Activated B cell treated with CpG ODN at 0.5 μM for 24 hours (primary cell): ENCODE measurements at regions of chr2 and their contacts with region 1.

Region 1: GRCh38 chr2:24421668-24422067 is 61.3 kb upstream of the ITSN2 start:
- DNase-seq: peak; percentile 26
- ATAC-seq: peak; percentile 65
- H3K4me3 Mint-ChIP-seq: no peak overlapping the region
- H3K27ac Mint-ChIP-seq: no peak overlapping the region
- H3K4me1 Mint-ChIP-seq: no peaks in the 10 kb centered on the region
- H3K27me3 Mint-ChIP-seq: peaks cover 2% of the 10 kb centered on the region
- CTCF ChIP-seq: no peak

Region 2: DNA sequence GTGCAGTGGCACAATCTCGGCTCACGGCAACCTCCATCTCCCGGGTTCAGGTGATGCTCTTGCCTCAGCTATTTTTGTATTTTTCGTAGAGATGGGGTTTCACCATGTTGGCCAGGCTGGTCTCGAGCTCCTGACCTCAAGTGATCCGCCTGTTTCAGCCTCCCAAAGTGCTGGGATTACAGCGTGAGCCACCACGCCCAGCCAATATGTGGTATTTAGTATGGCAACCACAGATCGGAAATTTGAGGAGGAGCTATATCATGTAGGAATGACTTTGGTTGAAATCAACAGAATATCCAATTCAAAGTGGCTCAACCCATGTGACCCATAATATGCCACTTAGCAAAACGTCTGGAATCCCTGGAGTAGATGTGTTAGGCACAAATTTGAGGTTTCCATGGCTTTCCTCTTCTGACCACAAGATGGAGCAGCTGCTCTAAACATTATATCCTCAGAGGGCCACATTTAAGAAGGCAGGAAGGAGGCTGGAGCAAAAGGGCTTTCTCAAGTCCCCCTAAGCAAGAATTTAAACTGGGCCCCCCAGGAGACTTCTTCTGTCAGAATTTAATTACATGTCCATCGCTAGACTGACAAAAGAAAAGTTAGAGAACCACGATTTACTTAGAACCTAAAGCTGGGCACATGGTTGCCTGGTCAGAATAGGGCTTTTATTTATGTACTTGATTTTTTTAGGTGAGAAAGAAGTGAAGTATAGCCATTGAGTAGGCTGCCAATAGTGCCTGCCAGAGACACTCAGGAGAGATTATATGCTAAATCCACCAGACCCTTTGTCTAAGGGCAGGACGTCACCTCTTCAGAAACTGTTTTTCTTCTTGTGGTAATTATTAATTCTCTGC is 11.7 kb before region 1 on chr2:
- CTCF ChIA-PET with region 1: interaction called, 24 read pairs
- POLR2A ChIA-PET with region 1: no interaction called
- intact Hi-C with region 1: no loop called
- DNase-seq: no peak
- ATAC-seq: peak; percentile 79
- H3K4me3 Mint-ChIP-seq: no peak overlapping the region
- H3K27ac Mint-ChIP-seq: no peak overlapping the region
- H3K4me1 Mint-ChIP-seq: no peaks in the 10 kb centered on the region
- H3K27me3 Mint-ChIP-seq: peaks cover 11% of the 10 kb centered on the region
- CTCF ChIP-seq: peak; percentile 86

Region 3: GRCh38 chr2:24543252-24543651 is 121.6 kb after region 1 on chr2:
- CTCF ChIA-PET with region 1: no interaction called
- POLR2A ChIA-PET with region 1: no interaction called
- intact Hi-C with region 1: loop called (anchors 5 kb)
- DNase-seq: no peak
- ATAC-seq: no peak
- H3K4me3 Mint-ChIP-seq: no peak overlapping the region
- H3K27ac Mint-ChIP-seq: no peak overlapping the region
- H3K4me1 Mint-ChIP-seq: peaks cover 21% of the 10 kb centered on the region
- H3K27me3 Mint-ChIP-seq: no peaks in the 10 kb centered on the region
- CTCF ChIP-seq: no peak

Region 4: GRCh38 chr2:24730481-24730880 is 308.8 kb after region 1 on chr2:
- CTCF ChIA-PET with region 1: no interaction called
- POLR2A ChIA-PET with region 1: no interaction called
- intact Hi-C with region 1: loop called (anchors 10 kb)
- DNase-seq: no peak
- ATAC-seq: no peak
- H3K4me3 Mint-ChIP-seq: no peak overlapping the region
- H3K27ac Mint-ChIP-seq: no peak overlapping the region
- H3K4me1 Mint-ChIP-seq: no peaks in the 10 kb centered on the region
- H3K27me3 Mint-ChIP-seq: no peaks in the 10 kb centered on the region
- CTCF ChIP-seq: no peak